Astrocyte of the cerebellum (primary cell): ENCODE measurements at regions of chr5 and their contacts with region 1.

Region 1: DNA sequence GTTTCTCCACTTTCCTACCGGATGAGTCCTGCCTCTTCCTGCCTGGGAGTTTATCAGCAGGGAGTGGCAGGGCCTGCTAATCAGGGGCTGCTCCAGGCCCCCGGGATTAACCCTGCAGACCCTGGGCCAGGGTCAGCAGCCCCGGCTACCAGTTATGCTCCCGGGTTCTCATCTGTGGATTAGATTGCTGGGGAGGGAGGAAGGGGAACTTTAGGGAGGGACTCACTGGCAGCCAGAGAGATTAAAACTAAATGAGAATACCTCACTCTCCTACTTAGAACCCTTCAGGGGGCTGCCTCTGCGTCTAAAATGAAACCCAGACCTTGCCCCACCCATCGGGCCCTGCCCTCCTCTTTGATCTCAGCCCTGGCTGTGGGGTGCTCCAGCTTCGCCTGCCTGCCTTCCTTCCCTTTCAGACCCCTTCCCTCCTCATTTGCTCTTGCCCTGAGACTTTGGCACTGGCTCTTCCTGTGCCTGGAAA is 130.5 kb upstream of the HAND1 start:
- DNase-seq: no peak
- H3K4me3 ChIP-seq: no peak overlapping the region
- CTCF ChIP-seq: no peak

Region 2: DNA sequence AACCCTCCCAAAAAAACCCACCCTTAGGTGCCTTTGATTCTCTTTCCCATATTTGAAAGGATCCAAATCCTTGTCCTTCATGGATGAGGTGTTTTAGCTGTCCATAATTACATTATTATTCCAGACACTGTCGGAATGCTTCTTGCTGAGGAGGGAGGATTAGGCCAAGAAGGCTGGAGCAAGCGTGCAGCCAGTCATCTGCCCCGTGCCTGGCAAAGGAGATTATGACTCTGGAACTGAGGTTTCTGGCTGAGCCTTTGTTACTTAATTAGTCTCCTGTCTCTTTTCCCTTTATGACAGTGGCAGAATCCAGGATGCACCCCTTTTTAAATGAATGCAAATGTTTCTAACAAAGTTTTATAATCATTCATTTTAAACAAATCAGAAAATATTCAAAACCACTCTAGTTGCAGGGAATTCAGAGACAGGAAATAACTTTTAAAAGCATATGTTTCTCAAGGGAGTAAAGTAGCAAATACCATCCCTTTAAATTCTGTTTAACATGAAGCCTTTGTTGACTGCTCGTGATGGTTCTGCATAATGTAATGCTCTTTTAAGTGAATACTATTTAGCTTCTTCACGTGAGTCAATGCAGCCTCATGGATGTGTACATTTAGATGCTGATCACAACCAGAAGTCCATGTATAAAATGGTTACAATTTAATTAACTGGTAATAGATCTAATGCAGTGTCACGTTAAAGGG is 348.2 kb before region 1 on chr5:
- in situ Hi-C with region 1: no loop called
- DNase-seq: no peak
- H3K4me3 ChIP-seq: no peak overlapping the region
- CTCF ChIP-seq: no peak

Region 3: DNA sequence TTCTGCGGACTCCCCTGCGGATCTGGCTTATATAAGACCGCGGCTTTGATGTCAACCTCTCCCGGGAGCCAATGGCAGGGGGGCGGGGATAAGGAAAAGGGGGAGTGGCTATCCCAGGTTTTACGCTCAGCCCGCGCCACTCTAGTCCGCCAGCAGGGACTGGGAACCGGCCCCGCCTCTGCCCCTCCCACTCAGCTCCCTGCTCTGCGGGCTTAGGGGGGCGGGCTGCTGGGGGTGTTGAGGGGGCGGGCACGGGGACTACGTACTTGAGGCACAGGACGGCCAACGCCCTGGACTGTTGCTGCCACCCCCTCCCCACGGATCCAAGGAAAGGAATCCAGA is 130.4 kb before region 1 on chr5 and contains the start of gene HAND1:
- in situ Hi-C with region 1: loop called (anchors 5 kb)
- DNase-seq: no peak
- H3K4me3 ChIP-seq: no peak within 1 kb of the TSS
- CTCF ChIP-seq: no peak

Region 4: DNA sequence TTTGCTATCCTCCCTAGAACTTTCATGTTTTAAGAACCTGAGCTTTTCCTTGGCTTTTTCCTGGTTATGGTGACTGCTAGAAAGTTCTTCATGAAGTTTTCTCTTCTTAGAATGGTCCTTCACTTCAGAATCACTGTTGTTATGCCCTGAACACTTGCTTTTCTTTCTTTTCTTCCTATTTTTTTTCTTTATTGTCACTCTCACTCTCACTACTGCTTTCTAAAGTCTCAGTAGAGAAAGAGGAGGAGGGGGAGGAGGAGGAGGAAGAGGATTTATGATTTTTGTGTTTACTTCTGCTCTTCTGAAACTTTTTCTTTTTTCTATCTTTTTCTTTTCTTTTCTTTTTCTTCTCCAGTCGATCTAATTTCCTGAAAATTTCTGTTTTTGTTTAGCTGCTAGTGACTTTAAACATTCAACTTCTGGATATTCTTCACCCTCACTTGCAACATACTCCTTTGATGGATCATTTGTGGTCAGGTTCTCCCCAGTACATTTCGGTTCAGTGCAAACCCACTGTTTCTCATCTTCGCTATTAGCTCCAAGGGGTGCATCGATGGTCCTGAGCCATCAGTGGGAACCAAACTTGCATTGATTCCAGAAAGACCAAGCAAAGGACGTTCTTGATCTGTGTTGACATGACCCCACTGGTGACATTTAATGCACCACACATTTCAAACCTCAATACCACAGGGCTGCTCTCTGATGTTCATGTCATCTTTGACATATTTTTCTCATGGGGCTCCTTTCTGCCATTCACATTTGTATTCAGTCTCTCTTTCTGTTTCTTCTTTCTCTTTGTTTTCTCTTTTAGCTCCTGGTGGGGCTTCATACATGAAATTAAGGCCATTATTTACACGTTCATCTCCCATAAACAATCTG is 48.9 kb before region 1 on chr5:
- in situ Hi-C with region 1: no loop called
- DNase-seq: no peak
- H3K4me3 ChIP-seq: no peak overlapping the region
- CTCF ChIP-seq: no peak

Region 5: DNA sequence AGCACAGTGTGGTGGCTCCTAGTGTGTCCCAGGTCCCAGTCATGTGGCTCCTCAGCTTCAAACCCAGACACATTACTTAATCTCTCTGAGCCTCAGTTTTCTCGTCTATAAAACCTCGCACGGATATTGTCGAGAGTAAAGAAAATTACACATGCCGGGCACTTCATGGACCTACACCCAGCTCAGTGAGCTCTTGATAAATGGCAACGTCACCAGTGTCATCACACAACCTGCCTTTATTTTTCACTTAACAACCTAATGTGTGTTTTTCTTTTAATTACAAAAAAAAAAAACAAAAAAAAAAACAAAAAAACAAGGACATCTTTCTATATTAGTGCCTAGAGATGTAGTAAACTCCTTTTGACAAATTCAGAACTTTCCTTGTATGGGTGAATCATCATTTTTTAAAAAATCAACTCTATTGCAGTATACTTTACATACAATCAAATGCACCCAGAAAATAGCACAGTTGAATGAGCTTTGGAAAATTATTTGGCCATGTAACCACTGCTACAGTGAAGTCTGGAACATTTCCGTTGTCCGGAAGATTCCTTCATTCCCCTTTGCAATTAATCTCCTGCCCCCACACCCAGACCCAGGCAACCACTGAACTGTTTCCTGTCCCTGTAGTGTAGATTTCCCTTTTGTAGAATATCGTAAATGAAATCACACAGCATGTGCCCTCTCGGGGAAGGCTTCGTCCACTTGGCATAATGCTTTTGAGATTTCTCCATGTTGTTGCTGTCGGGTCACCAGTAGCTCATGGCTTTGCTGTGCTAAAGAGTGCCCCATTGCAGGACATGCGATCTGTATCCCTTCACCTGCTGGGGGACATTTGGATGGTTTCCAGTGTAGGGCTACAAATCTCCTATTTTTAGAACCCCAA is 46.2 kb after region 1 on chr5:
- in situ Hi-C with region 1: no loop called
- DNase-seq: no peak
- H3K4me3 ChIP-seq: no peak overlapping the region
- CTCF ChIP-seq: no peak

Region 6: GRCh38 chr5:154683101-154683880 is 74.7 kb after region 1 on chr5:
- in situ Hi-C with region 1: no loop called
- DNase-seq: no peak
- H3K4me3 ChIP-seq: peak overlapping the region; percentile 46
- CTCF ChIP-seq: no peak